CD8-positive, alpha-beta T cell (primary cell): ENCODE measurements at regions of chr16 and their contacts with region 1.

Region 1: DNA sequence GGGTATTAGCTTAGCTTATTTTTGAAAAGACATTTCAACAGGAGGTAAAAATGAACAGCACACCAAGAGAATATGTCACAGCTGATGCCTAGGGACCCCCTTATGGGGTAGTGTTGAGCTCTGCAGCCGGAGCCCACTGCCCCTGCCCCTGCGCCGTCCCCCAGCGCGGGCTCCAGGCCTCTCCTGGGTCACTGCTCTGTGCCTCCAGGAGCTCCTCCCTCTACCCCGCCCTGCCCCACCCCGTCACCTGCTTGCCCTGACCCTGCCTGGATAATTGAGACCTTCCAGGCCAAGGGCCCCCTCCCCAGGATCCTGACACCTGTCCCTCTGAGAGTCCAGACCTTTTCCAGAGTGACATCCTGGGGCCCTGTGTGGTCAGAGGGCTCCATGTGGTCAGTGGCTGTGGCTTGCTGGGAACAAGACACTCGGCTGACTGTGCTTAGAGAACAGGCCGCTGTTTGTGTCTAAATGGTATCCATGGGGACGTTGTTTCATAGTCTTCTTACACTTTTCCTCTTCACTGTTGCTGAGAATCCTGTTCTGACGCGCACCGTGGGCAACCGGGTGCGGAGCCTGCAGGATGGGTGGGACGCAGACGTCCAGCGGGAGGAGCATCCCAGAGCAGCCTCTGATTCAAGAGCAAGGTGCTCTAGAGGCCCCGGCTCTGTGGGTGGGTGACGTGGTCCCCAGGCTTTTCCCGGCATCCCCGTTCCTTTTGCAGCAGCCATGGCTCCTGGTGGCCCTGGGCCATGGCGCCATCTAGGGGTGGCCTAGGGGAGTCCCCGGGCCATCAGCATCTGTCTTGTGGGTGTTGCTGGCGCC is 20.1 kb upstream of the WFIKKN1 start:
- DNase-seq: peak in 8 of 9 experiments; percentile 32 to 73 (median 65)
- ATAC-seq: peak; percentile 84
- H3K4me3 ChIP-seq: no peak overlapping the region
- H3K4me3 Mint-ChIP-seq: no peak overlapping the region
- H3K27ac ChIP-seq: no peak overlapping the region
- H3K27ac Mint-ChIP-seq: no peak overlapping the region
- H3K4me1 ChIP-seq: no peaks in the 10 kb centered on the region
- H3K4me1 Mint-ChIP-seq: peaks cover 6% of the 10 kb centered on the region
- H3K27me3 ChIP-seq: no peaks in the 10 kb centered on the region
- H3K27me3 Mint-ChIP-seq: no peaks in the 10 kb centered on the region
- CTCF ChIP-seq: peak; percentile 68

Region 2: DNA sequence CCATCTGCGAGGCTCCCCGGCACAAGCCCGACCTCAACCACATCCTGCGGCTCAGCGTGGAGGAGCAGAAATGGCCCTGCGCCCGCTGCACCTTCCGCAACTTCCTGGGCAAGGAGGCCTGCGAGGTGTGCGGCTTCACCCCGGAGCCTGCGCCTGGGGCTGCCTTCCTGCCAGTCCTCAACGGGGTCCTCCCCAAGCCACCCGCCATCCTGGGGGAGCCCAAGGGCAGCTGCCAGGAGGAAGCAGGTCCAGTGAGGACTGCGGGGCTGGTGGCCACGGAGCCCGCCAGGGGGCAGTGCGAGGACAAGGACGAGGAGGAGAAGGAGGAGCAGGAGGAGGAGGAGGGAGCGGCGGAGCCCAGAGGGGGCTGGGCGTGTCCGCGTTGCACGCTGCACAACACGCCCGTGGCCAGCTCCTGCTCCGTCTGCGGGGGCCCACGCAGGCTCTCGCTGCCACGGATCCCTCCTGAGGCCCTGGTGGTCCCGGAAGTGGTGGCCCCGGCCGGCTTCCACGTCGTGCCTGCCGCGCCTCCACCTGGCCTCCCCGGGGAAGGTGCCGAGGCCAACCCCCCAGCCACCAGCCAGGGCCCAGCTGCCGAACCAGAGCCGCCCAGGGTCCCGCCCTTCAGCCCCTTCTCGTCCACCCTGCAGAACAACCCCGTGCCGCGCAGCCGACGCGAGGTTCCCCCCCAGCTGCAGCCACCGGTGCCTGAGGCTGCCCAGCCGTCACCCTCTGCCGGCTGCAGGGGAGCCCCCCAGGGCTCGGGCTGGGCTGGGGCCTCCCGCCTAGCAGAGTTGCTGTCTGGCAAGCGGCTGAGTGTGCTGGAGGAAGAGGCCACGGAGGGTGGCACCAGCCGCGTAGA is 63.6 kb before region 1 on chr16:
- CTCF ChIA-PET with region 1: no interaction called
- POLR2A ChIA-PET with region 1: no interaction called
- intact Hi-C with region 1: loop called in 1 of 2 experiments (anchors 2 kb)
- DNase-seq: peak in 7 of 9 experiments; percentile 29 to 69 (median 63)
- ATAC-seq: peak; percentile 76
- H3K4me3 ChIP-seq: no peak overlapping the region
- H3K4me3 Mint-ChIP-seq: no peak overlapping the region
- H3K27ac ChIP-seq: no peak overlapping the region
- H3K27ac Mint-ChIP-seq: no peak overlapping the region
- H3K4me1 ChIP-seq: no peaks in the 10 kb centered on the region
- H3K4me1 Mint-ChIP-seq: no peaks in the 10 kb centered on the region
- H3K27me3 ChIP-seq: no peaks in the 10 kb centered on the region
- H3K27me3 Mint-ChIP-seq: no peaks in the 10 kb centered on the region
- CTCF ChIP-seq: no peak

Region 3: GRCh38 chr16:578870-579405 is 31.8 kb before region 1 on chr16:
- CTCF ChIA-PET with region 1: interaction called, 5 read pairs
- POLR2A ChIA-PET with region 1: no interaction called
- intact Hi-C with region 1: loop called in 1 of 2 experiments (anchors 2 kb)
- DNase-seq: peak; percentile 32 to 81 (median 60)
- ATAC-seq: peak; percentile 95
- H3K4me3 ChIP-seq: peak overlapping the region in 1 of 2 experiments; percentile 8
- H3K4me3 Mint-ChIP-seq: no peak overlapping the region
- H3K27ac ChIP-seq: no peak overlapping the region
- H3K27ac Mint-ChIP-seq: no peak overlapping the region
- H3K4me1 ChIP-seq: no peaks in the 10 kb centered on the region
- H3K4me1 Mint-ChIP-seq: no peaks in the 10 kb centered on the region
- H3K27me3 ChIP-seq: no peaks in the 10 kb centered on the region
- H3K27me3 Mint-ChIP-seq: no peaks in the 10 kb centered on the region
- CTCF ChIP-seq: peak; percentile 52

Region 4: DNA sequence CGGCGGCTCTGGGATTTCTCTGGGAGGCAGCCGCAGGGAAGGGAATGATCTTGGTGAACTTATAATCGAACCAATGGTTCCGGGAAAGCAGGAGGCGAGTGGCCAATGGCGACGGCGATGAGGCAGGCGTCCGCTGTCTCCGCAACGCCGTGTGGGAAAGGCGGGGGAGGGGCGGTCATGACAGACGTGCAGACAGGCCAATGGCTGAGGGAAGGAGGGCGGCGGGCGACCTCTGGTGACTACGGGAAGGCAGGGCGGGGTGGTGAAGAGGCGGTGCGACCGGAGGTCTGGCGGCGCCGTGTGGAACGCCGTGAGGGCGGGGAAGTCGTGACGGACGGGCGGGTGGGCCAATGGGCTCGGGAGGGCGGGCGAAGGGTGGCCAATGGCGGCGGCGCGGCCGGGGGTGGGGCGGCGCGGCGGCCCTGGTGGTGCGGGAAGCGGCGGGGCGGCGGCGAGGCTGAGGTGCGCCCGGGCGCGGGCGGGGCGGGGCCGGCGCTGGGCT is 21.0 kb before region 1 on chr16 and contains the start of gene RAB40C:
- CTCF ChIA-PET with region 1: no interaction called
- POLR2A ChIA-PET with region 1: no interaction called
- intact Hi-C with region 1: no loop called
- DNase-seq: peak; percentile 98 to 100 (median 99)
- ATAC-seq: peak; percentile 81
- H3K4me3 ChIP-seq: peak within 1 kb of the TSS; percentile 70 to 98
- H3K4me3 Mint-ChIP-seq: peak within 1 kb of the TSS; percentile 95
- H3K27ac ChIP-seq: peak within 1 kb of the TSS; percentile 84 to 93
- H3K27ac Mint-ChIP-seq: peak within 1 kb of the TSS; percentile 98
- H3K4me1 ChIP-seq: peaks cover 29% of the 10 kb centered on the region
- H3K4me1 Mint-ChIP-seq: peaks cover 40% of the 10 kb centered on the region
- H3K27me3 ChIP-seq: no peaks in the 10 kb centered on the region
- H3K27me3 Mint-ChIP-seq: no peaks in the 10 kb centered on the region
- CTCF ChIP-seq: no peak
- total RNA-seq, gene RAB40C: 3.9 to 5.9 TPM

Region 5: DNA sequence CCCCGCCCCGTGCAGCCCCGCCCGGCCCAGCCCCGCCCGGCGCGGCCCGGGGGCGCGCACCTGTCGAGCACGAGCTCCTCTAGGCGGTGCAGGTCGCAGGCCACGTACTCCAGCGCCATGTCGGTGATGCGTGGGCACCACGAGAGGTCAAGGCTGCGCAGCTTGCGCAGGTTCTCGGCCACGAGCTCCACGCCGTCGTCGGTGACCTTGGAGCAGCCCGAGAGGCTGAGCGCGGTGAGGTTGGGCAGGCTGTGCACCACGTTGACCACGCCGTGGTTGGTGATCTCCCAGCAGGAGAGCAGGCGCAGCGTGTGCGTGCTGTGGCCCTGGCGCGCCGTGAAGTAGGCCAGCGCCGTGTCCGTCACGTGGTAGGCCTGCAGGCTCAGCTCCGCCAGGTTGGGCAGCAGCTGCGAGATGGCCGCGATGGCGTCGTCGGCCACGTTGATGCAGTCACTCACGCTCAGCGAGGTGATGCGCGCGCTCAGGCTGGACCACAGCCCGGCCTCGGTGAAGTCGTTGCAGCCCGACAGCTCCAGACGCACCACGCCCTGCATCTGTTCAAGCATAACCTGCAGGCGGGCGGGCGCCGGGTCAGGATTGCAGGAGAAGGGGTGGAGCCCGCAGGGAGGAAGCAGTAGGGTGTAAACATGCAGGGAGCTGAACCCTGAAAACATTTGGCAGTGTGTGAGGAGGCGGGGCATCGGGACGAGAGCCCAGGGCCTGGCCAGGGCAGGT is 84.8 kb after region 1 on chr16:
- CTCF ChIA-PET with region 1: no interaction called
- POLR2A ChIA-PET with region 1: no interaction called
- intact Hi-C with region 1: no loop called
- DNase-seq: peak; percentile 41 to 85 (median 62)
- ATAC-seq: peak; percentile 76
- H3K4me3 ChIP-seq: peak overlapping the region; percentile 58 to 59
- H3K4me3 Mint-ChIP-seq: peak overlapping the region; percentile 77
- H3K27ac ChIP-seq: peak overlapping the region in 1 of 2 experiments; percentile 45
- H3K27ac Mint-ChIP-seq: peak overlapping the region; percentile 66
- H3K4me1 ChIP-seq: peaks cover 42% of the 10 kb centered on the region
- H3K4me1 Mint-ChIP-seq: peaks cover 28% of the 10 kb centered on the region
- H3K27me3 ChIP-seq: peaks cover 0 to 17% of the 10 kb centered on the region in 2 experiments
- H3K27me3 Mint-ChIP-seq: no peaks in the 10 kb centered on the region
- CTCF ChIP-seq: no peak